ENCODE measurements at regions of chr15 and their contacts with region 1.

Region 1: DNA sequence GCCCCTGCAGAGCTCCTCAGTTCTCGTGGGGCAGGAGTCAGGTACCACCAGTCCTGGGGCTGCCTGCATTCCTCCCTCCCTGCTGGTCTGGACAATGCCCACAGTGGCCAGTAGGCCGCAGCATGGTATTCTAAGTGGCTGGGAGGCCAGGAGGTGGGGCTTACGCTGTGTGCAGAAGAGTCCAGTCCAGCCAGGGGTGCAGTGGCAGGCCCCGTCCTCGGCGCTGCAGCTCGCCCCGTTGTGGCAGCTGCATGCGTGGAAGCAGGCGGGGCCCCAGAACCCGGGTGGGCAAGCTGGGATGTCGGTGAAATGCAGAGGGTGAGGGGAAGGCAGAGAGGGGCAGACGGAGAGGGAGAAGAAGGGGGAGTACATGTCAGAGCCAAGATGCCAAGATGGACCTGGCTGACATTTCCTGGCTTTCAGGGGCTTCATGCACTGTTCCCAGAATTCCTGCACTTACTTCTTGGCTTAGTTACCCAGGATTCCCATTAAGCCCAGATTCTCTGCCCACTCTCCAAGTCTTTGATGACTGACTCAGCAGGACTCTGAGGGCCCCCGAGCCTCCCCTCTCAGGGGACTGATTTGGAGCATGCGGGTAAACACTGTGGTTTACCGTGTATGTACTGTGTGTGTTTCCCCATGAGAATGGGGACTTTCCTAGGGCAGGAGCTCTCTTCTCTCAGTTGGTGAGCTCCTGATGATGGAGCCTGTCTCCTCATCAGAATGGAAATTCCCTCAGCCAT is 47.5 kb downstream of the RAB11A start:
- DNase-seq: peak; percentile 27
- H3K4me3 ChIP-seq: no peak overlapping the region
- H3K27ac ChIP-seq: no peak overlapping the region
- H3K4me1 ChIP-seq: no peaks in the 10 kb centered on the region
- H3K27me3 ChIP-seq: no peaks in the 10 kb centered on the region
- CTCF ChIP-seq: peak; percentile 66 to 74

Region 2: GRCh38 chr15:65962187-65962586 is 45.4 kb after region 1 on chr15:
- CTCF ChIA-PET with region 1: no interaction called
- dilution Hi-C with region 1: no loop called
- in situ Hi-C with region 1: no loop called
- intact Hi-C with region 1: no loop called
- DNase-seq: no peak
- H3K4me3 ChIP-seq: no peak overlapping the region
- H3K27ac ChIP-seq: no peak overlapping the region
- H3K4me1 ChIP-seq: peaks cover 7% of the 10 kb centered on the region
- H3K27me3 ChIP-seq: no peaks in the 10 kb centered on the region
- CTCF ChIP-seq: peak in 1 of 2 donors; percentile 10

Region 3: DNA sequence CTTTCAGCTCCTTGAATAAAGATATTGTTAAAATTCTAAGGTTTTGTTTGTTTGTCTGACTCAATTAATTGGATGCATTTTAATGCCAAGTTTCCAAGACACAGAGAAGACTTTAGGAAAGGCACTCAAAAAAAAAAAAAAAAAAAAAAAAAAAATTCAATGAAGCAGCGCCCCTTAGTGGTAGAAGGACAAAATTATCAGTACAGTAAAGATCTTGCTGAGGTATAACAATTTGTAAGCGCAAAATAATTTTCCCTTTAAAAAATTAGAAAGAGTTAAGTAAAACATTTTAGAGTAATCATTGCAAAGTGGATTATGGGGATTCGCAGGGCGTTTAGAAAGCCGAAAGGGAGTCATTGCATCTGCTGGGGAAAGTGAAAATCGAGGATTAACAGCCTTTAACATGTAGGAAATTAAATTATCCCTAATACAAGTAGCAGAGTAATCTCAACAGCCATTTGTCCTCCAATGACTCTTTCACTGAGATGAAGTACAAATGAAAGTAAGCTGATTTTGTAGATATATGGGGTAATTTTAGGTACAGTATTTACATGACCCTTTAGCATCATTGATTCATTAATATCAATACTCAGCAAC is 370.7 kb after region 1 on chr15:
- CTCF ChIA-PET with region 1: no interaction called
- dilution Hi-C with region 1: no loop called
- in situ Hi-C with region 1: no loop called
- intact Hi-C with region 1: loop called (anchors 1 kb)
- DNase-seq: peak; percentile 14
- H3K4me3 ChIP-seq: no peak overlapping the region
- H3K27ac ChIP-seq: no peak overlapping the region
- H3K4me1 ChIP-seq: peaks cover 7% of the 10 kb centered on the region
- H3K27me3 ChIP-seq: no peaks in the 10 kb centered on the region
- CTCF ChIP-seq: peak; percentile 56 to 61

Measured in mammary epithelial cell (primary cell).